ENCODE measurements at regions of chr1 and their contacts with region 1.

Region 1: DNA sequence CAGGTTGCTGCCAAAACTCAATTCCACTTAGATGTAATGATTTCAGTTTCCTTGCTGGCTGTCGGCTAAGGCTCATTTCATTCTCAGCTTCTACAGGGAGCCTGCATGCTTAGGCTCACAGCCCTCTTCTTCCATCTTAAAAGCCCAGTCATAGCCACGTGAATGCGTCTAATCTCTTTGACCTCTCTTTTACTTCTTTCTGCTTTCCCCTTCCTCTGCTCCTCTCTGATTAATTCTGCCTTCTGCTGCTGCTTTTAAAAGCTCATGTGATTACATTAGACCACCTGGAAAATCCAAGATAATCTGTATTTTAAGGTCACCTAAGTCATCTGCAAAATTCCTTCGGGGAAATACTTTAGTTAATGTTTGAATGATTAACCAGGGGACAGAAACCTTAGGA is 812.8 kb upstream of the BRINP3 start:
- DNase-seq: no peak
- ATAC-seq: no peak
- H3K4me3 ChIP-seq: no peak overlapping the region
- H3K4me3 Mint-ChIP-seq: no peak overlapping the region
- H3K27ac ChIP-seq: no peak overlapping the region
- H3K27ac Mint-ChIP-seq: no peak overlapping the region
- H3K4me1 ChIP-seq: no peaks in the 10 kb centered on the region
- H3K4me1 Mint-ChIP-seq: no peaks in the 10 kb centered on the region
- H3K27me3 ChIP-seq: no peaks in the 10 kb centered on the region
- H3K27me3 Mint-ChIP-seq: no peaks in the 10 kb centered on the region
- CTCF ChIP-seq: no peak

Region 2: GRCh38 chr1:191350938-191351337 is 60.5 kb after region 1 on chr1:
- intact Hi-C with region 1: loop called (anchors 10 kb)
- DNase-seq: no peak
- ATAC-seq: no peak
- H3K4me3 ChIP-seq: no peak overlapping the region
- H3K4me3 Mint-ChIP-seq: no peak overlapping the region
- H3K27ac ChIP-seq: no peak overlapping the region
- H3K27ac Mint-ChIP-seq: no peak overlapping the region
- H3K4me1 ChIP-seq: no peaks in the 10 kb centered on the region
- H3K4me1 Mint-ChIP-seq: no peaks in the 10 kb centered on the region
- H3K27me3 ChIP-seq: no peaks in the 10 kb centered on the region
- H3K27me3 Mint-ChIP-seq: no peaks in the 10 kb centered on the region
- CTCF ChIP-seq: no peak

Region 3: GRCh38 chr1:191405417-191405816 is 115.0 kb after region 1 on chr1:
- intact Hi-C with region 1: no loop called
- DNase-seq: no peak
- ATAC-seq: no peak
- H3K4me3 ChIP-seq: no peak overlapping the region
- H3K4me3 Mint-ChIP-seq: no peak overlapping the region
- H3K27ac ChIP-seq: no peak overlapping the region
- H3K27ac Mint-ChIP-seq: no peak overlapping the region
- H3K4me1 ChIP-seq: no peaks in the 10 kb centered on the region
- H3K4me1 Mint-ChIP-seq: no peaks in the 10 kb centered on the region
- H3K27me3 ChIP-seq: no peaks in the 10 kb centered on the region
- H3K27me3 Mint-ChIP-seq: no peaks in the 10 kb centered on the region
- CTCF ChIP-seq: no peak

Measured in natural killer cell (primary cell).